ENCODE measurements at regions of chr13 and their contacts with region 1.

Region 1: GRCh38 chr13:49996951-49997895 is at the start of gene TRIM13:
- DNase-seq: peak; percentile 86
- ATAC-seq: peak; percentile 87
- H3K4me3 Mint-ChIP-seq: peak within 1 kb of the TSS; percentile 94
- H3K27ac Mint-ChIP-seq: peak within 1 kb of the TSS; percentile 89
- H3K4me1 Mint-ChIP-seq: peaks cover 22% of the 10 kb centered on the region
- H3K27me3 Mint-ChIP-seq: no peaks in the 10 kb centered on the region
- total RNA-seq, gene TRIM13: 19.7 to 19.9 TPM

Region 2: GRCh38 chr13:50069261-50069660 is 72.0 kb after region 1 on chr13:
- POLR2A ChIA-PET with region 1: interaction called, 10 read pairs
- DNase-seq: no peak
- ATAC-seq: no peak
- H3K4me3 Mint-ChIP-seq: no peak overlapping the region
- H3K27ac Mint-ChIP-seq: no peak overlapping the region
- H3K4me1 Mint-ChIP-seq: peaks cover 32% of the 10 kb centered on the region
- H3K27me3 Mint-ChIP-seq: no peaks in the 10 kb centered on the region

Region 3: GRCh38 chr13:50081679-50082425 is 84.6 kb after region 1 on chr13:
- POLR2A ChIA-PET with region 1: interaction called, 75 read pairs
- DNase-seq: peak; percentile 95
- ATAC-seq: peak; percentile 80
- H3K4me3 Mint-ChIP-seq: peak overlapping the region; percentile 100
- H3K27ac Mint-ChIP-seq: peak overlapping the region; percentile 100
- H3K4me1 Mint-ChIP-seq: peaks cover 31% of the 10 kb centered on the region
- H3K27me3 Mint-ChIP-seq: no peaks in the 10 kb centered on the region